ENCODE measurements at regions of chr13 and their contacts with region 1.

Region 1: GRCh38 chr13:67224148-67224846 is 5.8 kb downstream of the PCDH9 start:
- DNase-seq: peak; percentile 27
- H3K4me3 Mint-ChIP-seq: no peak overlapping the region
- H3K27ac Mint-ChIP-seq: no peak overlapping the region
- H3K4me1 Mint-ChIP-seq: no peaks in the 10 kb centered on the region
- H3K27me3 Mint-ChIP-seq: no peaks in the 10 kb centered on the region
- CTCF ChIP-seq: peak; percentile 23

Region 2: DNA sequence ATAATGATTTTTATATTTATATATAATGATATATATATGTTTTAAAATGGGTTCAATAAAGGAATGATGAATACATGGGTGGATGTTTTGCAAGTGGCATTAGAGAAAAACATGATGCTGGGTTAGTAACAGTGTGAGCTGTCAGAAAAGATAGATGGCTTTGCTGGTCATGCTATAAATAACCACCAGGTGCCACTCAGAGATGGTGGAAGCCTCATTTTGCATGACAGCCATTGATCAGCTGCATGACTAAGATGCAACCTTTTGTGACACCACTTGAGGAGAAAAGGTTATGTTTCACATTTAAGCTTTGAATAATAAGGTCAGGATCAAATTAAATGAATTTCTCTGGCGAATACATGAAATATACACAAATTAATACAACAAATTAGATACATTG is 731.8 kb before region 1 on chr13:
- CTCF ChIA-PET with region 1: no interaction called
- intact Hi-C with region 1: loop called (anchors 5 kb)
- DNase-seq: no peak
- H3K4me3 Mint-ChIP-seq: no peak overlapping the region
- H3K27ac Mint-ChIP-seq: no peak overlapping the region
- H3K4me1 Mint-ChIP-seq: no peaks in the 10 kb centered on the region
- H3K27me3 Mint-ChIP-seq: no peaks in the 10 kb centered on the region
- CTCF ChIP-seq: no peak

Region 3: DNA sequence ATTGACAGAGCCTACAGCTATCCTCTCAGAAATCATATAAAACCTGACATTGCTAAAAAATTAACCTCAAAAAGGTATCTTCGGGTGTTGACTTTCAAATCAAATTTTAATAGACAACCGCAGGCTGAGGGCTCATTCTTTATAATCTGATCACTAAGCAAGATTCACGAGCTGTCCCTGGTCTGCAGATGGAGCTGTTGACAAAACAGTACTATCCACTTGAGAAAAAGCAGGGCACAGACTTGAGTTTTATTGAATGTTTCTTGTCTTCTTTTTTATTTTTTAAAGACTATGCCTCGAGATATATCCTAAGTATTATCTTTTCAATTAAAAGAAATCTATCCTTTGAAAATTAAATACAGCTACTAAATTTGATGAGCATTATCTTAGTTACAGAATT is 534.7 kb before region 1 on chr13:
- CTCF ChIA-PET with region 1: no interaction called
- intact Hi-C with region 1: loop called (anchors 10 kb)
- DNase-seq: no peak
- H3K4me3 Mint-ChIP-seq: no peak overlapping the region
- H3K27ac Mint-ChIP-seq: no peak overlapping the region
- H3K4me1 Mint-ChIP-seq: no peaks in the 10 kb centered on the region
- H3K27me3 Mint-ChIP-seq: no peaks in the 10 kb centered on the region
- CTCF ChIP-seq: no peak

Region 4: GRCh38 chr13:67493835-67494234 is 269.5 kb after region 1 on chr13:
- CTCF ChIA-PET with region 1: no interaction called
- intact Hi-C with region 1: no loop called
- DNase-seq: no peak
- H3K4me3 Mint-ChIP-seq: no peak overlapping the region
- H3K27ac Mint-ChIP-seq: no peak overlapping the region
- H3K4me1 Mint-ChIP-seq: no peaks in the 10 kb centered on the region
- H3K27me3 Mint-ChIP-seq: no peaks in the 10 kb centered on the region
- CTCF ChIP-seq: no peak